AG04449 (cell line): ENCODE measurements at regions of chr22 and their contacts with region 1.

Region 1: GRCh38 chr22:29689880-29690213 is 30.0 kb upstream of the CABP7 start:
- DNase-seq: no peak
- H3K4me3 ChIP-seq: no peak overlapping the region
- CTCF ChIP-seq: peak; percentile 85

Region 2: DNA sequence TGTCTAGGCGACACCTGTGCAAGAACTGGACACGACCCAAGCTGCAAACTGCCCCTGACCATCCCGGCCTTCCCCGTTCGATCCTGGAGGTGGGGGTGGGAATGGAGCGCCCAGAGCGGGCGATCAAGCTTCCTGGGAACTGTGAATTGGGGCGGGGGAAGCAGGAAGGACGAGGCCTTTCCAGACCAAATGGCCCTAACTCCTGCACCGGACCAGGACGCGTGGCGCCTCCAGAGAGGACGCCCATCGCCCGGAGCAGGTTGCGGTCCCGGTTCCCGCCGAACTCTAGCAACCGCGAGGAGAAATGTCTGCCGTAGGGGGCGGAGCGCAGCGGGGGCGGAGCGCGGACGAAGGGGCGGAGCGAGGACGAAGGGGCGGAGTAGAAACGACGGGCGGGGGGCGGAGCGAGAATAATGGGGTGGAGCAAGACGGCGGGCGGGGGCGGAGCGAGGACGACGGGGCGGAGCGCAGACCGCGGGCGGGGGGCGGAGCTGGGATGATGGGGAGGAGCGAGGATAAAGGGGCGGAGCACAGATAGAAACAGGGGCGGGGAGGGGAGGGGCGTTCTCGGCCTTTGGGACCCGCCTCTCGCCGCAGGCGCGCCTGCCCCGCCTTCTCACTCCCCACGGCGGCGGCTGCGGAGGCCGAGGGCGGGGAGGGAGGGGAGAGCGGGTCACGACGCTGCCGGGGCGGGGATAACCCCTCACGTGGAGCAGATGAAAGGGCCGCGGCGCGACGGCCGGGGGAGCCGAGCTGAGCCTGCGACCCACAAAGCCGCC is 806.8 kb before region 1 on chr22 and contains the start of gene ZNRF3:
- CTCF ChIA-PET with region 1: no interaction called
- POLR2A ChIA-PET with region 1: no interaction called
- DNase-seq: peak; percentile 50
- H3K4me3 ChIP-seq: peak within 1 kb of the TSS; percentile 69
- CTCF ChIP-seq: no peak

Region 3: DNA sequence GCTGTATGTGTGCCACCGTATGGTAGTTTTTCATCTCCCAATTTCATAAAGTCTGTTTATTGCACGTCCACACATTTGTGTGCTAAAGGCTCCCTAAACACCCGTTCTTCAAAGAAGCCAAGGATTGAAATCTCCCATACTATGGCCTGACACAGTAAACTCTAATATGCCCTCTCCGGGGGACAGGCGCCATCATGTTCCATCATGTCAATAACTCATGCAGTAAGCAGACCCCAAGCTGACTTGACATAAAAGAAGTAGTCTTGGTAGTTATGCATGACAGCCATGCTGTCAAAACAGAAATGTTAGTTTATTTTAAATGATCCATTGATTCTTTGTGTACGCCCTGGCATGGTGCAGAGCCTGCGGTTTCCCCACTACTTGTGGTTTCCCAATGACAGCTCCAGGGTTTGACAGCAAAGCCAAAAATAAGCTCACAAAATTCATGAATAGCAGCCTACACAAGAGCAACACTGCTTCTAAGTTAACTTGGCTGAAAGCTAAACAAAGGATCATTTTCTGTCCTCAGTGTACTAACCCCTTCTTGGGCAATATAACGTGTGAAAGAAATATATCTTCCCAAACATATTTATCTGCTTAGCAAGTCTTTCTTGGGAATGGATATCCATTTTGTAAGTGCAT is 26.5 kb before region 1 on chr22:
- CTCF ChIA-PET with region 1: interaction called, 13 read pairs
- POLR2A ChIA-PET with region 1: no interaction called
- DNase-seq: no peak
- H3K4me3 ChIP-seq: no peak overlapping the region
- CTCF ChIP-seq: no peak

Region 4: GRCh38 chr22:29679316-29679715 is 10.5 kb before region 1 on chr22:
- CTCF ChIA-PET with region 1: interaction called, 41 read pairs
- POLR2A ChIA-PET with region 1: no interaction called
- DNase-seq: no peak
- H3K4me3 ChIP-seq: no peak overlapping the region
- CTCF ChIP-seq: no peak

Region 5: GRCh38 chr22:29701155-29701999 is 11.5 kb after region 1 on chr22:
- CTCF ChIA-PET with region 1: interaction called, 14 read pairs
- POLR2A ChIA-PET with region 1: interaction called, 3 read pairs
- DNase-seq: no peak
- H3K4me3 ChIP-seq: no peak overlapping the region
- CTCF ChIP-seq: peak; percentile 14

Region 6: DNA sequence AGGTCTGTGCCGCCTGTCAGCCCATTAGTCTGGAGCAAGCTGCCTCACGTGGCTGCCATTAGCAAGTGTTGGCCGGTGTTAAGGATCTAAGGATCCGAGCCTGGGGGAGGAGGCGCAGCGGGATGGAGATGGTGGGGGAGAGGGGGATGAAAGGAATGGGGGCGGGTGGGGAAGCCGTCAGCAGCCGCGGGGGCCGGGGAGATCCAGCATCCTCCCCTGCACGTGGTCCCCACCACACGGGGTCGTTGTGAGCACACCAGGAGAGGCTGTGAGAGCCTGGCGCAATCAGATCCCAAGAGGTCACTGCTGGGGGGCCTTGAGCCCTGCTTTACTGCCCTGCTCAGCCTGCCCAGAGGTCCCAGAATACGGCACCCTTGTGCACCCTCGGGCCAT is 37.3 kb after region 1 on chr22:
- CTCF ChIA-PET with region 1: no interaction called
- POLR2A ChIA-PET with region 1: no interaction called
- DNase-seq: no peak
- H3K4me3 ChIP-seq: no peak overlapping the region
- CTCF ChIP-seq: peak; percentile 69

Region 7: DNA sequence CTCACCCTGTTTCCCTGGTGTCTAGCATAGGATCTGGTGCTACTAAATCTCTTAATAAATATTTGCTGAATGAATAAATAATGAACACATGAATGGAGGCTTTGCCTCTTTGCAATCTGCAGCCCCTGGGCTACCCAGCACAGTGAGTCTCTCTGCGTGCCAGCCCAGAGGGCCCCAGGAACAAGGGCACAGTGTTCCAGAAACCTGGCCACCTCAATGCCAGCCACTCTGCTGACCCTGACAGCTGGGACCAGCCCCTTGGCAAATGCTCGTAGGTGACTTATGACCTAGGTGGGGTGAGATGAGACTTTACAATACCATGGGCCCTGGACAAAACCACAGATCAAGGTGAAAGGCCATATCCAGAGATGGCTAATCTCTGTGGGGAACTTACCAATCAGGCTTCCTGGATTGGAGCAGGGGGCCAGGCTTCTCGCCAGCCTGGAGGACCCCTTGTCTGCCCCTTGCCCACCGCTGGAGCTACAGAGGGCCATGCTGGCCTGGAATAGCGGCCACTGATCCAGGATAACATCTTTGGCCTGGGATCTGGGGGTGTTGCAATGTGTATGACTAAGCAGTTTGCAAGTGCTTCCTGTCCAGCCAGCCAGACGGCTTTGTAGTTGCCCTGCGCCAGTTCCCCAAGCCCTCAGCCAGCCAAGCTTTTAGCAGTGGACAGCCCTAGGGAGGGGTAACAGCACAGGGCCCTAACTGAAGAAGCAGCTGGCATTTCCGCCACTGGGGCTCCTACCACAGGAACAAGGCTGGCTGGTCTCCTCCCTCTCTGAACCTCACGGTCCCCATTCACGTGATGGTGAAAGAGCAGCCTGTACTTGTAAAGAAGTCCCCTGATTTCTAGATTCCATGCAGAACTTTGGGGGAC is 109.2 kb after region 1 on chr22:
- CTCF ChIA-PET with region 1: no interaction called
- POLR2A ChIA-PET with region 1: no interaction called
- DNase-seq: peak; percentile 72
- H3K4me3 ChIP-seq: no peak overlapping the region
- CTCF ChIP-seq: no peak